ENCODE measurements at regions of chr11 and their contacts with region 1.

Region 1: GRCh38 chr11:102495161-102496042 is 35.1 kb downstream of the MMP7 start:
- ATAC-seq: peak; percentile 55 to 97 (median 68)
- H3K4me3 ChIP-seq: no peak overlapping the region
- H3K27ac ChIP-seq: no peak overlapping the region
- H3K4me1 ChIP-seq: no peaks in the 10 kb centered on the region

Region 2: DNA sequence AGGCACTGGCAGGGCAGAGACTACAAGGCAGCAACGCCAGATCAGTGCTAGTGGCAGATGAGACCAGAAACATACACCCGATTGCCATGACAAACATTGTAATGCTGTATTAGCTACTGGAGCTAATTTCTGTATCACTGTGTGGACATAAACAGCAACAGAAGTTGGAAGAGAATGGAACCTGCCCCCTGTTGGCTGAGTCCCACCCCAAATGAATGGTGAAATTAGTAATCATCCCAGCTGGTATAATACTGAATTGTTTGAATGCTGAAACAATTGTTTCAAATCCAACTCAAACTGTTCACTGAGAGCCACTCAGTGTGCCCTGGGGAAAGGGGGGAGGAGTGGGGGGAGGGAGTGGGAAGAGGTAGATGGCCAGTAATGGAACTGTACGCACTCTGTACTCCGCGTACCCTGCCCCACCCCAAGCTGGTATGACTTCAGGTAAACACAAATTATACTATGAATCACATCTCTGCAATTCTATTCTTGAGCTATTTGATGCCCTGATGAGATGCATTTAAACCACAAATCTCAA is 189.3 kb before region 1 on chr11:
- in situ Hi-C with region 1: no loop called
- ATAC-seq: no peak
- H3K4me3 ChIP-seq: no peak overlapping the region
- H3K27ac ChIP-seq: no peak overlapping the region
- H3K4me1 ChIP-seq: no peaks in the 10 kb centered on the region

Region 3: DNA sequence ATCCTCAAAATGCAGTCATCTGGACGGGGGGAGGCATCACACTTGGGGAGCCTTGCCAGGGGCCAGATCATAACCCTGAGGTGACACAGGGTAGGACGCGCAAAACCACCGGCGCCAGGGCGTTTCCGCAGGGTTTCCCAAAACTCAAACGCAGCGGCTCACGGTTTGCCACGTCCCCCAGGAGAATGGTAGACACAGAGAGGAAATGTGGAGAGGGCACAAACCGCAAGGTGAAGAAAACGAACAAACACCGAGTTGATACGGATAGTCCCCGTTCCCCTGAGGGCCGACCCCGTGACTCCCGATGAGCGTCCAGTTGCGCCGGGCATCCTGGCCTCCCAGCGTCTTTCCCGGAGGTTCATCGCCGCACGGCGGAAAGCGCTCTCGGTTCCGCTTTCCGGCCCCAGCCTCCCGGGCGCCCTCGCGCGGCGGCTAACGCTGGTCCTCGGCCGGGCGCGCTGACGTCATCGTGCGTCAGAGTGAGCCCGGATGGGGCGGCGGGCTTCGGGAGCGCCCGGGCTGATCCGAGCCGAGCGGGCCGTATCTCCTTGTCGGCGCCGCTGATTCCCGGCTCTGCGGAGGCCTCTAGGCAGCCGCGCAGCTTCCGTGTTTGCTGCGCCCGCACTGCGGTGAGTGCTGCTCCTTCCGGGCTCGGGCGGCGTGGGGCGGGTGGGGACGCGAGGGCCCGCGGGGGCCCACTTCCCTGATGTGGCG is 148.5 kb before region 1 on chr11 and contains the start of gene BIRC2:
- in situ Hi-C with region 1: loop called in 1 of 9 experiments (anchors 10 kb)
- ATAC-seq: peak; percentile 86 to 96 (median 93)
- H3K4me3 ChIP-seq: peak within 1 kb of the TSS; percentile 60 to 85 (median 77)
- H3K27ac ChIP-seq: peak within 1 kb of the TSS; percentile 84 to 89
- H3K4me1 ChIP-seq: peaks cover 12 to 15% of the 10 kb centered on the region in 2 donors
- total RNA-seq, gene BIRC2: 22.1 to 65.0 (median 49.4) TPM

Region 4: GRCh38 chr11:102390667-102391465 is 104.5 kb before region 1 on chr11:
- in situ Hi-C with region 1: loop called in 3 of 9 experiments (anchors 25 kb)
- ATAC-seq: peak in 7 of 8 experiments; percentile 42 to 85 (median 67)
- H3K4me3 ChIP-seq: no peak overlapping the region
- H3K27ac ChIP-seq: no peak overlapping the region
- H3K4me1 ChIP-seq: no peaks in the 10 kb centered on the region